ENCODE measurements at regions of chr12 and their contacts with region 1.

Region 1: DNA sequence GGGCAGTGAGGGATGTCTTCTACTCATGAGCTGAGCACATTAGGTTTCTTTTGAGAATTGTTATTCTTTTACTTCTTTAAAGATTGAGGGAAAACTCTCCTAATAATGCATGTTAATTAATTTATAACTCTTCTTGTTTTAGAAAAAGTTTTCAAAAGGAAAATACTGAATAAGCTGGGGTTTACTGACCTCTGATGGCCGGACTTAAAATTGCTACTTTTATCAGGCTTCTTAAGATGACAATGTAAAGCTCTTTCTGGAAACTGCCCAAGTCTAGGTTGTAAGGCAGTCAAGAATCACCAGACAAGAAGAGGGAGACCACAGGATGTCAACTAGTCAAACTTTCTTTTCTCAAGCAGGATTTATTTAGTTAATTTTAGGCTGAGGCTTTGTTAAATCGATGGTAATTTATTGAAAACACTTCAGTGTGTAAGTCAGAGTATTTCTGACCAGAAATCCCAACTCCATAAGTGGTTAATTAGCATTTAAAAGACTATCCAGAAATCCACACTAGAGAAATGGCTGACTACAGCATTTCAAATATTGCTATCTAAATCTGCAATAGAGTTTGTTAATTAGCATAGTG is 82.1 kb downstream of the AVPR1A start:
- DNase-seq: peak; percentile 34
- H3K4me3 ChIP-seq: no peak overlapping the region
- H3K27ac ChIP-seq: no peak overlapping the region
- H3K27me3 ChIP-seq: no peaks in the 10 kb centered on the region
- CTCF ChIP-seq: peak; percentile 64

Region 2: GRCh38 chr12:62581288-62582064 is 487.5 kb before region 1 on chr12:
- CTCF ChIA-PET with region 1: interaction called, 16 read pairs
- POLR2A ChIA-PET with region 1: interaction called, 3 read pairs
- DNase-seq: peak; percentile 20
- H3K4me3 ChIP-seq: no peak overlapping the region
- H3K27ac ChIP-seq: no peak overlapping the region
- H3K27me3 ChIP-seq: no peaks in the 10 kb centered on the region
- CTCF ChIP-seq: peak; percentile 77

Region 3: DNA sequence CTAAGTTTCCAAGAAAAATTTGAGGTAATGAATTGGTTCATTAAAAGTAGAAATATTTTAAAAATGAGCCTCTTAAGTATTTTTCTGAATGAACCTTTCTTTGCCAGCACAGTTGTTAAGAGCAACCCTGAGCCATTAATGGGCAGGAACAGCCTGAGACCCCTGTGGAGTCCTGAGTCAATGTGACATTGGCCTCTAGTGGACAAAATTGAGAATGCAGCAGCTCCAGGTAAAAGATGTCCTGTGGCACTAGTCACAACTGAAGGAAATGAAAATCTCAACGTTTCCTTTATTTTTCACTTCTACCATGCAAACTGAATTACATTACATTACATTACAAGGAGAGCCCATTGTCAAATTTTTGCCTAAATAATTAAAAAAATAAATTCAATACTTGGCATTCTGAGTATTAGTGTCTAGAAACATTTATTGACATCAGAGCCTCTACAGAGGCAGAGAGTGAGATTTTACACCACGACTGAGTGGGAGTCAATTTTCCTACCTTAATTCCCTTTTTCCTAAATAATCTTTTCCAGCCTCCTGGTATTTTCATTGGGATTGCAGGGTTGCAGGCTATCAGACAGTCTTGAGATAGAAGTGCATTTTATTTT is 269.7 kb before region 1 on chr12:
- CTCF ChIA-PET with region 1: interaction called, 43 read pairs
- POLR2A ChIA-PET with region 1: no interaction called
- DNase-seq: peak; percentile 43
- H3K4me3 ChIP-seq: no peak overlapping the region
- H3K27ac ChIP-seq: no peak overlapping the region
- H3K27me3 ChIP-seq: peaks cover 2% of the 10 kb centered on the region
- CTCF ChIP-seq: peak; percentile 98

Region 4: DNA sequence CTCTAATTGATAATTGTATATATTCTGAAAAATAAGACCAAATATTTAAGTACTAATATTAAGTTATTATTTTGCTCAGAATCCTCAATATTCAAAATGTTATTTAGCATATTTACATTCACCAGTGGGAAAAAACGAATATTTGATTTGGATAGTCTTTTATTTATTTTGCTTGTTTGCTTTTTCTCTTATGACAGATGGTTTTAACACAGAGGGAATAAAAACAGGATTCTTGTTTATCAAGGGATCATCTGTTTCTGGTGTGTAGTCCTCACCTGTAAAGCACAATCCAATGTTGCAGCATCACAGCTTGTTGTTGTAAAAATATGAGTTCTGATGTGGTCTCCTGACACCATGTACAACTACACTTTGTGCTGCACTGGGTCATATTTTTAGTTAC is 21.8 kb before region 1 on chr12:
- CTCF ChIA-PET with region 1: interaction called, 16 read pairs
- POLR2A ChIA-PET with region 1: interaction called, 3 read pairs
- DNase-seq: no peak
- H3K4me3 ChIP-seq: no peak overlapping the region
- H3K27ac ChIP-seq: no peak overlapping the region
- H3K27me3 ChIP-seq: no peaks in the 10 kb centered on the region
- CTCF ChIP-seq: no peak